Tibial artery (tissue), 4 donors: ENCODE measurements at regions of chrX and their contacts with region 1.

Region 1: DNA sequence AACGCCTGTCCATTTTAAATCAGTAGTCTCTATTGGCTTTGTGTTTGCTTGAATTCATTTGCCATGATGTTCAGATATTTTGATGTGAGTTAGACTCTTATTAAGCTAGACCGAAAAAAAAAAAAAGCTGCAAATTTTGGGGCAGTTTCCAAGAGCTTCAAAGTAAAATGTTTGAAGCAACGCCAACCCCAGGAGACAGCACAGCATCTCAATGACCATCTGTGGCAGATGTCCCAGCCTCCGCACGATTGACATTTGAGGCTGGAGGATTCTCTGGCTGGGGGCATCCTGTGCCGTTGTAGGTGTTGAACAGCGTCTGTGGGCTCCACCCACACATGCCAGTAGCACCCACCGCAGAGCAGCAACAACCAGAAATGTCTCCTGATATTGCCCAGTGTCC is 17.1 kb upstream of the ARSF start:
- DNase-seq: no peak
- H3K4me3 ChIP-seq: no peak overlapping the region
- H3K27ac ChIP-seq: no peak overlapping the region
- H3K4me1 ChIP-seq: no peaks in the 10 kb centered on the region
- H3K27me3 ChIP-seq: no peaks in the 10 kb centered on the region
- CTCF ChIP-seq: no peak

Region 2: DNA sequence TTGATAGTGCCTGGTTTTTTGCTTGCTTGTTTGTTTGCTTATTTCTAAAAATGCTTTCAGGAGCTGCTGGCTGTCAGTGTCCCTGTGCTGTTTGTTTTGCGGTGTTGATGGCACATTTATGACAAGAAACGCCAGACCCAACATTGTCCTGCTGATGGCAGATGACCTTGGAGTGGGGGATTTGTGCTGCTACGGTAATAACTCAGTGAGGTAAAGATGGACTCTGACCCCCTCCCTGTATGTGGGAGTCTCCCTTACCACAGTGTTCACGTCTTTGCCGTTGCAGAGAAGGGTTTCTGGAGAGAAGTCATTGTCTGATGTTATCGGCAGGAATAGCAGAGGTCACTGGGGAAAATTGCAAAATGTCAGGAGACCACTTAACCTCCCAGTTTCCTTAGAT is 17.7 kb before region 1 on chrX and contains the start of gene ARSH:
- intact Hi-C with region 1: loop called (anchors 1 kb)
- DNase-seq: no peak
- H3K4me3 ChIP-seq: no peak within 1 kb of the TSS
- H3K27ac ChIP-seq: no peak within 1 kb of the TSS
- H3K4me1 ChIP-seq: no peaks in the 10 kb centered on the region
- H3K27me3 ChIP-seq: no peaks in the 10 kb centered on the region
- CTCF ChIP-seq: no peak

Region 3: DNA sequence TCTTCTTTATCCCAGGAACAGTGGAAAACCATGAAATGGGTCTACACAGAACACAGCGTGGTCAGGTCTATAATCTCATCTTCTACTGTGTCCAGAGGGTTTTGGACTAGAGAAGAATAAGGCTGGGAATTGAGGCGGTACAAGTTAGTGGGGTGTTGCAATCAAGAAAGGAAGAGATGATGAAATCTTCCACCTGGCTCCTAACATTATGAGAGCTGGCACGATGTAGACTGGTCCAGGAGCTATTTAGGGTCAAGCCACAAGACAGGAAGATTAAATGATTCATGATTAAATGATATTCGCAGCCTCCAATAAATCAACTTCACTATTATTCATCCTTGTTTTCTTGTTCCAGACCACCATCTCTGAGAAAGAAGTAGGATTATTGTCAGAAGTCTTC is 105.1 kb after region 1 on chrX:
- intact Hi-C with region 1: no loop called
- DNase-seq: no peak
- H3K4me3 ChIP-seq: no peak overlapping the region
- H3K27ac ChIP-seq: no peak overlapping the region
- H3K4me1 ChIP-seq: no peaks in the 10 kb centered on the region
- H3K27me3 ChIP-seq: no peaks in the 10 kb centered on the region
- CTCF ChIP-seq: no peak

Region 4: DNA sequence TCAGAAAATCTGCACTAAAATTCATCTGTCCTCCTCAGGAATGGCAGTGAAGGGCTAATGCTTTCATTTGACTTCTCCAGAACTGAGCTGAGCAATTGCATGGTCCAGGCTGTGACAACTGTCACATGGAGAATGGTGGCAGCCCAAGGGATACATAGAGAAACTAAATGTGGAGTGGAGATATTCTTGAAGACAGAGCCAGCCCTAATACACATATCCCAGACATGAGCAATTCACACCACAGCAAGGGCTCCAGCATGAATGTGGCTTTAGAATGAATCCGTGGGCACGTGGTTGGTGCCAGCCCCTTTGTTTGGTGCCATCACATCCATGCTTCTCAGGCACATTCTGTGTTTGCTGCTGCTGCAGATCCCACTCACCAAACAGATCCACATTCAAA is 443.9 kb after region 1 on chrX:
- intact Hi-C with region 1: no loop called
- DNase-seq: no peak
- H3K4me3 ChIP-seq: no peak overlapping the region
- H3K27ac ChIP-seq: no peak overlapping the region
- H3K4me1 ChIP-seq: no peaks in the 10 kb centered on the region
- H3K27me3 ChIP-seq: no peaks in the 10 kb centered on the region
- CTCF ChIP-seq: no peak